Activated naive CD4-positive, alpha-beta T cell treated with anti-CD3 and anti-CD28 coated beads for 36 hours (primary cell): ENCODE measurements at regions of chr21 and their contacts with region 1.

Region 1: DNA sequence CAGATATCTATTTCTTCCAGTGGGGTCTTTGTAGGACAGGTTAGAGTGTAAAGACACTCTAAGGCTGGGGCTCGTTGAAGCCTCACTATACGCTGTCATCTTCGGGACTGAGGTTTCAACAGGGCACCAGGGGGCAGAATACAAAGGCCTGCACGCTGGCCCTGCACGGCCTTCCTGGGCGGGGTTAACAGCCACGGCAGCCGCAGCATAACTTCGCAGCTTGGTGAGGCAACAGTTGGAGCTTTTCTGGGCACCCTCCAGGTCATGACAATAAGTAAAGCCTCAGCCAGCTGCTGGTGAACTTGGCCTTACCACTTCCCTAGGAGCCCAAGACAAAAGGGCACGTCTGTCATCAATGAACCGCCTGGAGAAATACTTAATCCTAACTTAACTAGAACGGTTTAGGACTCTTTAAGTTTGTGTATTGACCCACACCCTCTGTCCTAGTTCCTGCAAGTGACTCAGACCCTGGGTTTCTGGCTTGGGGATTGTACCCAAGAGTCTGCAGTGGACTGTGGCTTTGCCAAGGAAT is 2.3 kb upstream of the RUNX1 start:
- DNase-seq: peak; percentile 91
- H3K4me3 Mint-ChIP-seq: peak overlapping the region; percentile 16
- H3K27ac Mint-ChIP-seq: peak overlapping the region; percentile 97
- H3K4me1 Mint-ChIP-seq: peaks cover 59% of the 10 kb centered on the region
- H3K27me3 Mint-ChIP-seq: no peaks in the 10 kb centered on the region

Region 2: GRCh38 chr21:34707876-34708325 is 343.5 kb before region 1 on chr21:
- CTCF ChIA-PET with region 1: no interaction called
- intact Hi-C with region 1: loop called (anchors 5 kb)
- DNase-seq: peak; percentile 83
- H3K4me3 Mint-ChIP-seq: no peak overlapping the region
- H3K27ac Mint-ChIP-seq: peak overlapping the region; percentile 73
- H3K4me1 Mint-ChIP-seq: peaks cover 28% of the 10 kb centered on the region
- H3K27me3 Mint-ChIP-seq: peaks cover 4% of the 10 kb centered on the region

Region 3: DNA sequence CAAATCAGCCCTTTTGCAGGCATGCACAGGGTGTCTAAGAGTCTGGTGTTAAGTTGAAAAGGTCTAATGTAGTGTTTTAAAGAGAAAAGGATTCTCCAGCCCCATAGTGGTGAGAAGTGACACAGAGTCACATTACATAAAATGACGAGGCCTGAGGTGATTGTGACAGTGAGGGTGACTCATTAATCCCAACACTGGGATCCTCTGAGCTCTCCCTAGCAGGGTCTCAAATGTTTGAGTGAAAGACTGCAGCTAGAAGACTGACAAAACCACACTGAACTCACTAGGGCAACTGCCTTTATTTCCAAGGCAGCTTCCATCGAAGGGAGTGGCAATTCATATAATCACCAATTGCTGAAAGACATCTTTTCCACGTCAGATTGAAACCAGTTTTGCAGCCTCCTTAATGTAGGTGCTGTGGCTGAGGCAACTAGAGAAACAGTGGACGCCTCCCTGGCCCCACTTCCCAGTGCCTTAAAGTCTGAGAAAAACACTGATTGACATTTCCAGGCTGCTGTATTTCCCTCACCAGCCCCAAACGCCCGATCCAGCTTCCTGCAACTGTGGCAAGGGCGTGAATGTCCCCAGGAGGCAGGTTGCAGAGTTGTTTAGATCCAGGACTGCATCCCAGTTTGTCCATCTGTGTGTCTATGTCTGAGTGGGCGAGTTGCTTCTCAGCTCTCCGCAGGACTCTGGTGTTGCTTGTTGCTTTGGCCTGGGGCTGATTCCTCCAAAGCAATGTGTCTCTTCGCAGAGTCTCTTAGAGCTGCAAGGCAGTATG is 83.7 kb before region 1 on chr21:
- CTCF ChIA-PET with region 1: interaction called, 5 read pairs
- intact Hi-C with region 1: loop called (anchors 1 kb)
- DNase-seq: peak; percentile 73
- H3K4me3 Mint-ChIP-seq: peak overlapping the region; percentile 47
- H3K27ac Mint-ChIP-seq: peak overlapping the region; percentile 93
- H3K4me1 Mint-ChIP-seq: peaks cover 84% of the 10 kb centered on the region
- H3K27me3 Mint-ChIP-seq: no peaks in the 10 kb centered on the region

Region 4: GRCh38 chr21:35084869-35085268 is 33.5 kb after region 1 on chr21:
- CTCF ChIA-PET with region 1: interaction called, 11 read pairs
- intact Hi-C with region 1: loop called (anchors 1 kb)
- DNase-seq: no peak
- H3K4me3 Mint-ChIP-seq: no peak overlapping the region
- H3K27ac Mint-ChIP-seq: no peak overlapping the region
- H3K4me1 Mint-ChIP-seq: peaks cover 32% of the 10 kb centered on the region
- H3K27me3 Mint-ChIP-seq: peaks cover 3% of the 10 kb centered on the region

Region 5: DNA sequence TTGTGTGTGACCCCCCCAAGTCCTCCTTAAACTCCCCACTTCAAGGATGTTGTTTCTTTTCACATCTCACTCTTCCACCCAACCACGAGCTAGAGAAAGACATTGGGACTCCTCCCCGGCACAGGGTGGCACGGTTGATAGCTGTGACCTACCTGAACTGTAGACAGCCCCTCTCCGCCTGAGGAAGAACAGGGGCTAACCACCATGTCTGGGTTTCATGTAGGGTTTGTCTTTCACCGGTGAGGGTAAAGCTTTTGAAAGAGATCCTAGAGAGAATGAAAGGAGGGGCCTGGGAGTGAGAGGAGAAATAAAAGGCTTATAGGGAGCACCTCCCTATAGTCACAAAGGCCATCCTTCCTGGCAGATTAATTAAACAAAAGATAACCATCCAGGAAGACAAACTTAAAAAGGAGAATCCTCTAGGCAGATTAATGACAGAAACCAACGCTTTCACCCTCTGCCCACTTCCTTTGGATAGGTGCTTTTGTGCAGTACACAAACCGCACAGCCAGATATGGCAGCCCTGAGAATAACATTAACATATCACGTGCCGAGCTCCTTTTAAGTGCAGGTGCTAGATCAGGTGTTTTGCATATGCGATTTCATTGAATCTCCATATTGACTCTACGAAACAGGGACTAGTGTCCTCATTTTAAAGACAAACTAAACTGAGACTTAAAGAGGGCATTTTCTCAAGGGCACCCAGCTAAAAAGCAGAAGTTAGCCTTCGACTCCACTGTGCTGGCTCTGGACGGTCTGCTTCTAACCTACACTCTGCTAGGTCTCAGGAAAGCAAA is 175.8 kb after region 1 on chr21:
- CTCF ChIA-PET with region 1: no interaction called
- intact Hi-C with region 1: loop called (anchors 1 kb)
- DNase-seq: peak; percentile 87
- H3K4me3 Mint-ChIP-seq: peak overlapping the region; percentile 66
- H3K27ac Mint-ChIP-seq: peak overlapping the region; percentile 87
- H3K4me1 Mint-ChIP-seq: peaks cover 39% of the 10 kb centered on the region
- H3K27me3 Mint-ChIP-seq: no peaks in the 10 kb centered on the region

Region 6: GRCh38 chr21:35291973-35292627 is 240.7 kb after region 1 on chr21:
- CTCF ChIA-PET with region 1: no interaction called
- intact Hi-C with region 1: no loop called
- DNase-seq: no peak
- H3K4me3 Mint-ChIP-seq: no peak overlapping the region
- H3K27ac Mint-ChIP-seq: no peak overlapping the region
- H3K4me1 Mint-ChIP-seq: peaks cover 20% of the 10 kb centered on the region
- H3K27me3 Mint-ChIP-seq: no peaks in the 10 kb centered on the region

Region 7: GRCh38 chr21:35508139-35508888 is 457.0 kb after region 1 on chr21:
- CTCF ChIA-PET with region 1: no interaction called
- intact Hi-C with region 1: loop called (anchors 2 kb)
- DNase-seq: peak; percentile 42
- H3K4me3 Mint-ChIP-seq: no peak overlapping the region
- H3K27ac Mint-ChIP-seq: no peak overlapping the region
- H3K4me1 Mint-ChIP-seq: peaks cover 58% of the 10 kb centered on the region
- H3K27me3 Mint-ChIP-seq: no peaks in the 10 kb centered on the region